Motor neuron (in vitro differentiated cells): ENCODE measurements at regions of chr5 and their contacts with region 1.

Region 1: GRCh38 chr5:36305571-36306326 is 4.0 kb upstream of the RANBP3L start:
- ATAC-seq: peak; percentile 8 to 64 (median 47)
- H3K4me3 ChIP-seq: no peak overlapping the region
- H3K27ac ChIP-seq: no peak overlapping the region
- H3K4me1 ChIP-seq: peaks cover 15 to 31% of the 10 kb centered on the region in 2 donors

Region 2: GRCh38 chr5:36241631-36242533 is 63.9 kb before region 1 on chr5 and contains the start of gene NADK2:
- in situ Hi-C with region 1: loop called in 1 of 9 experiments (anchors 10 kb)
- ATAC-seq: peak; percentile 79 to 88 (median 84)
- H3K4me3 ChIP-seq: peak within 1 kb of the TSS; percentile 41 to 74 (median 56)
- H3K27ac ChIP-seq: peak within 1 kb of the TSS; percentile 76 to 95
- H3K4me1 ChIP-seq: peaks cover 15 to 27% of the 10 kb centered on the region in 2 donors
- total RNA-seq, gene NADK2: 9.9 to 65.4 (median 35.8) TPM